Activated naive CD4-positive, alpha-beta T cell treated with anti-CD3 and anti-CD28 coated beads for 36 hours (primary cell): ENCODE measurements at regions of chr15 and their contacts with region 1.

Region 1: DNA sequence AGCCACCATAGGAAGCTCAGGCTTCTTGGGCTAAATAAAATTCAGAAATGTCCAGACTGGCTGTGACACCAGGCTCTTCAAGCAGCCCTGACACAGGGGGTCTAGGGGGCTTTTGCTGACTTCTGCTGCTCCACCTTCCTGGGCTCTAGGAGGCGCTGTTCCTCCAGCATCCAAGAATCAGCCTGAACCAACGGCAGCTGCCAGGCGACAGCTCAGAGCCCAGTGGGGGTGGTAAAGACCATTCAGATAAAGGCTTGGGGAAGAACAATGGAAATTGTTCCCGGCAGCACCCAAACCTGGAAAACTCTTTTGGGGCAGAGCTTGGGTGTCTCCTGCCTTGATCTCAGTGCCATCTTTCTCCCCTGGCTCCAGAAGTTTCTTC is 21.6 kb upstream of the PSTPIP1 start:
- DNase-seq: peak; percentile 85
- H3K4me3 Mint-ChIP-seq: no peak overlapping the region
- H3K27ac Mint-ChIP-seq: no peak overlapping the region
- H3K4me1 Mint-ChIP-seq: peaks cover 16% of the 10 kb centered on the region
- H3K27me3 Mint-ChIP-seq: no peaks in the 10 kb centered on the region

Region 2: DNA sequence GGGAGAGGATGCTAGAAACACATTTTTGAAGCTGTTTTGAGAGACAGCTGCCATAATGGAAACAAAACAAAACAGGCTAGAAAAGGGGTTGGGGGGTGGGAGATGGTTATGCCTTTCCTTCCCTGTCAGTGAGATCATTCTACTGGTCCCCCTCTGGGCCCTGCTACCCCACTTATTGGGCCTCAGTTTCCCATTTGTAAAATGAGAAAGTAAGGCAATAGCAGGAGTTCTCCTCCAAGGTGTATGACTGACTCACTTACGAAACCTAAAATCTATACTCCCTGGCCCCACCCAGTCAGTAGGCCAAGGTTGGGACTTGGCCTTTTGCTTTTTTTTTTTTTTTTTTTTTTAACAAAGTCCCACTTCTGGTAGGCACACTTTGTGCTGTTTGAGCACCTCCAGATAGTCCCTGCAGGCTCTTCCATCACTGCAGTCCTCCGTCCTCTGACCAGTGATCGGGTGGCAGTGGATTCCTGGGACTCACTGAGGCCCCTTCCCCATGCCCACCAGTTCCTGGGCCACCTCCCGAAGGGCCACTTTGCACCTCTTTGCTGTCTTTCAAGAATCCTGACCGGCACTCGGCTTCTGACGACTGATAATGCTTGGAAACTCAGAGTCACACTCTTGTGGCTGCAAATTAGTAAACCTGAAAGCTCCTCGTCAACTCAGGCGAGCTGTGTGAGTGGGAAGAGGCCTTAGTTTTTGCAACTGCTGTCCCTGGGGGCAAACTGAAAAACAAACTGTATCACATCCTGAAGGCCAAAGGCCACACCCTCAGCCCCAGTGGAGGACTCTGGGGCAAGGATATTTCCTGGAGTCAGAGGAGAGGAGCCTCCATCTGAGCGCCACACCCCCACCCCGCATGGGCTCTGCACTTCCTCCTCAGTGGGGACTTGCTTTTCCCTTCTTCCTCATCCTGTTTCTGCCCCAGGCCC is 14.8 kb after region 1 on chr15:
- CTCF ChIA-PET with region 1: interaction called, 38 read pairs
- intact Hi-C with region 1: loop called (anchors 1 kb)
- DNase-seq: peak; percentile 92
- H3K4me3 Mint-ChIP-seq: peak overlapping the region; percentile 53
- H3K27ac Mint-ChIP-seq: peak overlapping the region; percentile 98
- H3K4me1 Mint-ChIP-seq: peaks cover 43% of the 10 kb centered on the region
- H3K27me3 Mint-ChIP-seq: no peaks in the 10 kb centered on the region

Region 3: GRCh38 chr15:77013776-77014131 is 40.4 kb after region 1 on chr15:
- CTCF ChIA-PET with region 1: interaction called, 16 read pairs
- intact Hi-C with region 1: no loop called
- DNase-seq: peak; percentile 97
- H3K4me3 Mint-ChIP-seq: peak overlapping the region; percentile 61
- H3K27ac Mint-ChIP-seq: peak overlapping the region; percentile 89
- H3K4me1 Mint-ChIP-seq: peaks cover 92% of the 10 kb centered on the region
- H3K27me3 Mint-ChIP-seq: no peaks in the 10 kb centered on the region

Region 4: GRCh38 chr15:77034695-77035489 is 61.5 kb after region 1 on chr15:
- CTCF ChIA-PET with region 1: interaction called, 16 read pairs
- intact Hi-C with region 1: no loop called
- DNase-seq: peak; percentile 65
- H3K4me3 Mint-ChIP-seq: no peak overlapping the region
- H3K27ac Mint-ChIP-seq: peak overlapping the region; percentile 65
- H3K4me1 Mint-ChIP-seq: no peaks in the 10 kb centered on the region
- H3K27me3 Mint-ChIP-seq: no peaks in the 10 kb centered on the region

Region 5: GRCh38 chr15:77118882-77119321 is 145.5 kb after region 1 on chr15:
- CTCF ChIA-PET with region 1: interaction called, 10 read pairs
- intact Hi-C with region 1: loop called (anchors 2 kb)
- DNase-seq: peak; percentile 64
- H3K4me3 Mint-ChIP-seq: no peak overlapping the region
- H3K27ac Mint-ChIP-seq: no peak overlapping the region
- H3K4me1 Mint-ChIP-seq: peaks cover 8% of the 10 kb centered on the region
- H3K27me3 Mint-ChIP-seq: no peaks in the 10 kb centered on the region

Region 6: DNA sequence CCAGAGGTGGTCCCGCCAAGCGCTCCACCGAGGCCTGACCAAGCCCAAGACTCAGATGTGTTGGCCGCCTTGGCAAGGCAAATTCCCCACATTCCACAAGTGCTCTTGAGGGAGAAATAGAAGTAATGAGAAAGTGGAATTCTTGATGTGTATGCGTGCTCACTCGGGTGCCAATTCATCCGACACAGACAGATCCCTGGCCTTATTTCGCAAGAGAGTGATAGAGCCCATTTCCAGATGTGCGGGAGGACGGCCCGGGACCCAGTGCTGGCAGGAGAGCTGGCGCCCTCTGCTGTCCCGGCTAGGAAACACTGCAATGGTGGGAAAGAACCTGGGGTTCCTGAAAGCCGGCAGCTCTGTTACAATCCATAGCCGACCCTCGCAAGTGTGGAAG is 523.4 kb after region 1 on chr15:
- CTCF ChIA-PET with region 1: interaction called, 6 read pairs
- intact Hi-C with region 1: loop called (anchors 2 kb)
- DNase-seq: peak; percentile 83
- H3K4me3 Mint-ChIP-seq: no peak overlapping the region
- H3K27ac Mint-ChIP-seq: no peak overlapping the region
- H3K4me1 Mint-ChIP-seq: peaks cover 18% of the 10 kb centered on the region
- H3K27me3 Mint-ChIP-seq: no peaks in the 10 kb centered on the region

Region 7: DNA sequence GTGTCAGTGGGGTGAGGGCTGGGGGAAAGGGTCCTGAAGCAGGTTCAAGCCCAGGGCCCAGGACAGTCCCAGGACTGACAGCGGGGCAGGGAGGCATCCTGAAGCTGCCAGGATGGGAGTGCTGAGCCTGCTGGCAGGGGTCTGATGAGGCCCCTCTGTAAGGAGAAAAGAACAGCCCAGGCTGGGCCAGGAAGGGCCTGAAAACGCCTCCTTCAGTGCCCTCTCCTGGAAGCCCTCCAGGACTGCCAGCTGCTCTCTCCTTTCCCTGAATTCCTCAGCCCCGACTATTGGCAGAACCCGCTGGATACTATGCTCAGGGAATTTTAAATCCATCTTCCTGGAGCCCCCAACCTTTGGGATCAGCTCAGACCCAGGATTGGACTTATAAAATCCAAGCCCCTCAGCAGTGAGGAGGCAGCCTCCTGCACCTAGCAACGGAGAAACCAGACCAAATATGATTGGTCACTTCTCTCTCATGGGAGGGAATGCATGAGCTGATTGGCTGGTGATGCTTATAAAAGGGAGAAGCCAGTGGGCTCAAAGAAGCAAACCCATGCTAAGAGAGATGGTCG is 862.9 kb after region 1 on chr15:
- CTCF ChIA-PET with region 1: no interaction called
- intact Hi-C with region 1: no loop called
- DNase-seq: no peak
- H3K4me3 Mint-ChIP-seq: no peak overlapping the region
- H3K27ac Mint-ChIP-seq: no peak overlapping the region
- H3K4me1 Mint-ChIP-seq: no peaks in the 10 kb centered on the region
- H3K27me3 Mint-ChIP-seq: peaks cover 5% of the 10 kb centered on the region